ENCODE measurements at regions of chr2 and their contacts with region 1.

Region 1: DNA sequence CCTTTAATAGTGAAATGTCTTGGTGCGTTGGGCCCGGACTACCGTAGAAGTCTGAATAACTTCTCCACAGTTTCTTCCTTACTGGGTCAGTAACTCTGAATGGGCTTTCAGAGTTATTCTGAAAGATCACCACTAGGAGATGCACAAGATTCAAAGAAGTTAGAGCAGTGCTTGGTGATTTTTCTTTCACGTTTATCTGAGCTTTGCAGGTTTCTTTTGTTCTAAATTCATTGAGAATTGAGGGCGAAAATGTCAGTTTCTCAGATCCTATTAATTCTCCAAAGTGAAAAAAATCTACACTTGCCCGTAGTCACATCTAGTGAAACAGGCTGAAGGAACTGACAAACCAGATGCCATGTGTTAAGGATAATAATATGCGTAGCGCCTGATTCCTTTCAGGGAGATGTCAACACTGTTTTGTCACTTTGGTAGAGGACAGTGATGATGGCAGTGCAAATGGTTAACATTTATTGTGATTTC is 70.1 kb downstream of the QPCT start:
- DNase-seq: peak; percentile 72 to 82 (median 82)
- H3K4me3 ChIP-seq: no peak overlapping the region
- H3K27ac ChIP-seq: no peak overlapping the region
- H3K4me1 ChIP-seq: peaks cover 2 to 18% (median 9%) of the 10 kb centered on the region in 4 experiments
- H3K27me3 ChIP-seq: no peaks in the 10 kb centered on the region

Region 2: GRCh38 chr2:37400041-37400440 is 14.5 kb before region 1 on chr2:
- CTCF ChIA-PET with region 1: interaction called, 19 read pairs
- POLR2A ChIA-PET with region 1: no interaction called
- DNase-seq: no peak
- H3K4me3 ChIP-seq: no peak overlapping the region
- H3K27ac ChIP-seq: no peak overlapping the region
- H3K4me1 ChIP-seq: peaks cover 0 to 2% (median 0%) of the 10 kb centered on the region in 4 experiments
- H3K27me3 ChIP-seq: no peaks in the 10 kb centered on the region

Region 3: DNA sequence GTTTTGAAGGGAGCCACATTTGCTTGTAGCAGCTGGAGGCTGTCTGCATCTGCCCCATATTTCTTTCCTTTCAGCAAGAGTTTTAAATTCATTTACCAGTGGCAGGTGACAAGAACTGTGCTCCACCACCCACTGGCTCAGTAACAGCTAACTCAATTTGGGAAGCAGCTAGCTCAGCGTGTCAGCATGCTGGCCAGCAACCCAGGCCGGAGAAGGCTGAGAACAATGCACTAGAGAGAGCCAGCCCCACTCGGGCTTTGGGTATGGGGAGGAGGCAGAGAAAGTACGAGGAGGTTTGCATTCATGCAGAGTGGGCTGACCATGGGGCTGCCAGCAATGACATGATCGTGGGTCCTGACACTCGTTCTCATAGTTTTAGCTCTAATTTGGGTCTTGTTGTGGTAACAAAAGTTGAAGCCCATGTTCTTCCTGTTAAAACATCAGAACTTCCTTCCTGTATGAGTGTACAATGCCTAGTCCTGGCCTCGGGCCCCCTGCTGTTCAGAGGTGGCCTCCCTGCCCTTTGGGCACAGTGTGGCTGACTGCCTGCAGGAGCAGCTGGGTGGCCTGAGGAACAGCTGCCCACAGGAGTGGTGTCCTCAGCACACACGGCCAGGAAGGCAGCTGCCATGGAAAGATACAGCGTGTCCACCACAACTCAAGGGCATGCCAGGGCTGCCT is 234.0 kb after region 1 on chr2:
- CTCF ChIA-PET with region 1: interaction called, 14 read pairs
- POLR2A ChIA-PET with region 1: no interaction called
- DNase-seq: peak; percentile 53 to 86 (median 82)
- H3K4me3 ChIP-seq: peak overlapping the region in 2 of 7 experiments; percentile 5 to 17
- H3K27ac ChIP-seq: peak overlapping the region in 1 of 2 experiments; percentile 22
- H3K4me1 ChIP-seq: peaks cover 23 to 63% (median 35%) of the 10 kb centered on the region in 4 experiments
- H3K27me3 ChIP-seq: no peaks in the 10 kb centered on the region

Region 4: GRCh38 chr2:37832590-37833197 is 418.2 kb after region 1 on chr2:
- CTCF ChIA-PET with region 1: interaction called, 180 read pairs
- POLR2A ChIA-PET with region 1: no interaction called
- DNase-seq: peak; percentile 80 to 83 (median 80)
- H3K4me3 ChIP-seq: no peak overlapping the region
- H3K27ac ChIP-seq: no peak overlapping the region
- H3K4me1 ChIP-seq: peaks cover 18 to 41% (median 31%) of the 10 kb centered on the region in 4 experiments
- H3K27me3 ChIP-seq: no peaks in the 10 kb centered on the region

Region 5: DNA sequence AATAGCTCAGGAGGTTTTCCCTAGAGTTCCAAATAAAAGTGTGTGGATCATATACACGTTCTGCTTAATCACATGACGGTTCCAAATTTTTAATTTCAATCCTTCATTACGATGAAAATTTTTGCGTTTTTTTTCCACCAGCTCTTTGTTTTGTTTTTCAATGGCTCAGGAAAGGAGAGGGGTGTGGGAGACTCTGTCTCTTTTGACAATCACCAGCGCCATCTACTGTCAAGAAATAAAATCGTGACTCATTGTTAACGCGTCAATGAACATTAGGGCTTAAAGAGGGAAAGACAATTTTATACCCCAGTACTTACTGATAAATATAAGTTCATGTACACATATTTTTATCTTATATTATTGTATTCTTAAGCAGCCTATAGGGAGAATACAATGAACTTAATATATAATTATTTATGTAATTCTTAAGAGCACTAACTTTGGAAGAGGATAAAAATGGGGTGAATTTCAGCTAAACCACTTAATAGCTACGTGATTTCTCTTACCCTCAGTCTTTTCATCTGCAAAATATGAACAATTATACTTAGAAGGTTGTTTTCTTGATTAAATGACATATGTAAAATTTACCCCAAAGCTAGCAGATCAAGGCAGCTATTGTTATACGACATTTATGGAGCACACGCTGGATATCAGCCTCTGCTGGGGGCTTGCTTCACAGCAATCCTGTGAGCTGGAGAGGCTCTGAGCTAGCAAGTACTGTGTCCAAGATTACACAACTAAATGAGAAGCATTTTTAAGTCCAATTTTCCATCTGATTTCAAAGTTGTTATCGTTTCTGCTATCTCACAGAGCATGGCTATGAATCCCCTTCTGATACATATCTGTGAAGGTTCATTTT is 463.2 kb after region 1 on chr2:
- CTCF ChIA-PET with region 1: interaction called, 97 read pairs
- POLR2A ChIA-PET with region 1: interaction called, 3 read pairs
- DNase-seq: peak; percentile 70 to 78 (median 72)
- H3K4me3 ChIP-seq: no peak overlapping the region
- H3K27ac ChIP-seq: no peak overlapping the region
- H3K4me1 ChIP-seq: peaks cover 0 to 26% (median 15%) of the 10 kb centered on the region in 4 experiments
- H3K27me3 ChIP-seq: no peaks in the 10 kb centered on the region

Measured in common myeloid progenitor, CD34-positive (primary cell).